Aorta (tissue), 5 donors: ENCODE measurements at regions of chr4 and their contacts with region 1.

Region 1: GRCh38 chr4:186587416-186588018 is 32.1 kb upstream of the MTNR1A start:
- DNase-seq: peak; percentile 73 to 91
- ATAC-seq: peak; percentile 86
- H3K4me3 ChIP-seq: no peak overlapping the region
- H3K27ac ChIP-seq: no peak overlapping the region
- H3K4me1 ChIP-seq: no peaks in the 10 kb centered on the region
- H3K27me3 ChIP-seq: no peaks in the 10 kb centered on the region

Region 2: DNA sequence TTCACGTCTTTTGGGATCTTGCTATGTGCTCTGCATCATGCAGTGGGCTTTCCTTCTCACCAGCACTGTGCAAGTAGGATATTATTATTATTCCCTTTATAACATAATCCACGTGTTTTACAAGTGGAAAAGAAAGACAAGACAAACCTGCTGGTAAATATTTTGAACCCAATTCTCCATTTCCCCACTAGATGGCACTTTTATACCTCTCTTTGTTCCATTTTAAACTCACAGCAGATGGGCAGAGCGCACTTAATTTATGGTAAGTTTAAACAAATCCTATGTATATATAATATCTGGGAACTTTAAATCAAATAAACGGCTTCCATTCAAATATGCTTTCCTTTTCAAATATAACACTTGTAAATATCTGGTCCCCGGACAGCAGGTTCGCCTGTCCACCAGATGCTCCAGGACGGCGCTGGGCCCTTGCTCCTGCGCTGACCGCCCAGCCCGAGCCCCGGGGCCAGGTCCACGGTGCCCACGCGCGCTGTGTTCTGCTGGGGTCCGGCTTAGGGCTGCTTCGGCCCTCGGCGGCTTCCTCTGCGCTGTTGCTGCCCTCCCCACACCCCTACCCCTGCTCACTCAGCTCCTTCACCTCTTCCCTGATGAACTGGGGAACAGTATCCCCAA is 290.4 kb before region 1 on chr4:
- intact Hi-C with region 1: loop called (anchors 5 kb)
- DNase-seq: no peak
- ATAC-seq: no peak
- H3K4me3 ChIP-seq: no peak overlapping the region
- H3K27ac ChIP-seq: no peak overlapping the region
- H3K4me1 ChIP-seq: no peaks in the 10 kb centered on the region
- H3K27me3 ChIP-seq: no peaks in the 10 kb centered on the region

Region 3: GRCh38 chr4:186472948-186473347 is 114.6 kb before region 1 on chr4:
- intact Hi-C with region 1: loop called (anchors 2 to 5 kb)
- DNase-seq: no peak
- ATAC-seq: no peak
- H3K4me3 ChIP-seq: no peak overlapping the region
- H3K27ac ChIP-seq: no peak overlapping the region
- H3K4me1 ChIP-seq: peaks cover 0 to 2% of the 10 kb centered on the region in 2 donors
- H3K27me3 ChIP-seq: no peaks in the 10 kb centered on the region